CD4-positive, alpha-beta memory T cell (primary cell): ENCODE measurements at regions of chr1 and their contacts with region 1.

Region 1: GRCh38 chr1:226827968-226828513 is 42.4 kb upstream of the PSEN2 start:
- DNase-seq: peak; percentile 87 to 93 (median 90)
- H3K4me3 ChIP-seq: peak overlapping the region in 1 of 2 donors; percentile 11
- H3K4me3 Mint-ChIP-seq: peak overlapping the region; percentile 31 to 77 (median 53)
- H3K27ac ChIP-seq: peak overlapping the region; percentile 48
- H3K27ac Mint-ChIP-seq: peak overlapping the region; percentile 70 to 87 (median 80)
- H3K4me1 ChIP-seq: peaks cover 11% of the 10 kb centered on the region
- H3K4me1 Mint-ChIP-seq: peaks cover 9 to 31% (median 14%) of the 10 kb centered on the region in 4 donors
- H3K27me3 ChIP-seq: no peaks in the 10 kb centered on the region
- H3K27me3 Mint-ChIP-seq: no peaks in the 10 kb centered on the region

Region 2: GRCh38 chr1:226547754-226548191 is 280.3 kb before region 1 on chr1:
- CTCF ChIA-PET with region 1: no interaction called
- POLR2A ChIA-PET with region 1: no interaction called
- intact Hi-C with region 1: loop called (anchors 5 kb)
- DNase-seq: peak; percentile 49 to 63 (median 56)
- H3K4me3 ChIP-seq: peak overlapping the region in 1 of 2 donors; percentile 28
- H3K4me3 Mint-ChIP-seq: peak overlapping the region in 6 of 8 donors; percentile 33 to 71 (median 56)
- H3K27ac ChIP-seq: no peak overlapping the region
- H3K27ac Mint-ChIP-seq: no peak overlapping the region
- H3K4me1 ChIP-seq: peaks cover 22% of the 10 kb centered on the region
- H3K4me1 Mint-ChIP-seq: peaks cover 10 to 21% (median 14%) of the 10 kb centered on the region in 4 donors
- H3K27me3 ChIP-seq: peaks cover 17% of the 10 kb centered on the region
- H3K27me3 Mint-ChIP-seq: peaks cover 23 to 33% of the 10 kb centered on the region in 2 donors

Region 3: DNA sequence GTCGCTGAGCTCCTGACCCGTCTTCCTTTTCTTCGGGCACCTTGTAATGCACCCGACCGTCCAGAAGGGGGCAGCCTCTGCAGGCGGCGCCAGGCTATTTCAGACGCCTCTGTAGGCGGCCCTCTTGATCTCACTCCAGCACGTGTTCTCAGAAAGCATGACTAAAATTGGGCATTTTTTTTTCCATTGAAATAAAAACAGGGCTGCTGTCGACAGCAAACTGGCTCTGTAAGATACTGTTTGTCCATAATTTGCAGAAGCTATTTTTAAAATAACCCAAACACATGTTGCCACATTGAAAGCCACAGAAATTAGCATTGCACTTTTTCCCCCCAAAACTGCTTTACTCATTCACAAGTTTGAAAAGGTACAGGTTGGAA is 201.5 kb before region 1 on chr1:
- CTCF ChIA-PET with region 1: interaction called, 131 read pairs
- POLR2A ChIA-PET with region 1: interaction called, 10 read pairs
- intact Hi-C with region 1: loop called (anchors 1 kb)
- DNase-seq: peak; percentile 71 to 79 (median 74)
- H3K4me3 ChIP-seq: no peak overlapping the region
- H3K4me3 Mint-ChIP-seq: peak overlapping the region; percentile 34 to 84 (median 61)
- H3K27ac ChIP-seq: no peak overlapping the region
- H3K27ac Mint-ChIP-seq: peak overlapping the region in 6 of 7 donors; percentile 12 to 89 (median 64)
- H3K4me1 ChIP-seq: peaks cover 11% of the 10 kb centered on the region
- H3K4me1 Mint-ChIP-seq: peaks cover 11 to 31% (median 22%) of the 10 kb centered on the region in 4 donors
- H3K27me3 ChIP-seq: no peaks in the 10 kb centered on the region
- H3K27me3 Mint-ChIP-seq: peaks cover 0 to 2% of the 10 kb centered on the region in 2 donors

Region 4: DNA sequence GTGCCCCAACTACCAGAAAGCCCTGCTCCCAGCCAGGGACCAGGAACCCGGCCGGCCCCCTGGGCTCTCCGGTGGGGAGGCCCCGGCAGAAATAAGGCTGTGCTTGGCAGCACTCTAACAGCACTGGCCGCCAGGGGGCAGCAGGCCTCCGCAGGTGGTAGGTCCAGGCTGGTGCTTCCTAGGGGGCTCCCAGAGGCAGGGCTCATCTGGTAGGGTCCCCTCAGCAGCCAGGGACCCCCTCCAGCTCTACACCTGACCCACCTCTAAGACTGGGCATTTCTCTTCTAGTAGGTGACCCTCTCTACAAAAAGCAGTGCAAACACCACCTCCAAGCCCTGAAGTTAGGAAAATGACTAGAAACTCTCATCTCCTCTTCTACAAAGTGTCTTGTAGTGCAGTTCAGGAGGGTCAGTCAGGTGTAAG is 193.9 kb before region 1 on chr1:
- CTCF ChIA-PET with region 1: interaction called, 131 read pairs
- POLR2A ChIA-PET with region 1: interaction called, 10 read pairs
- intact Hi-C with region 1: loop called (anchors 1 kb)
- DNase-seq: peak; percentile 74 to 81 (median 78)
- H3K4me3 ChIP-seq: no peak overlapping the region
- H3K4me3 Mint-ChIP-seq: peak overlapping the region in 7 of 8 donors; percentile 1 to 82 (median 53)
- H3K27ac ChIP-seq: peak overlapping the region; percentile 56
- H3K27ac Mint-ChIP-seq: peak overlapping the region; percentile 72 to 94 (median 88)
- H3K4me1 ChIP-seq: peaks cover 53% of the 10 kb centered on the region
- H3K4me1 Mint-ChIP-seq: peaks cover 28 to 70% (median 53%) of the 10 kb centered on the region in 4 donors
- H3K27me3 ChIP-seq: no peaks in the 10 kb centered on the region
- H3K27me3 Mint-ChIP-seq: no peaks in the 10 kb centered on the region

Region 5: GRCh38 chr1:226649780-226650179 is 178.3 kb before region 1 on chr1:
- CTCF ChIA-PET with region 1: interaction called, 9 read pairs
- POLR2A ChIA-PET with region 1: interaction called, 3 read pairs
- intact Hi-C with region 1: loop called (anchors 1 kb)
- DNase-seq: peak in 3 of 5 donors; percentile 36 to 65 (median 42)
- H3K4me3 ChIP-seq: no peak overlapping the region
- H3K4me3 Mint-ChIP-seq: peak overlapping the region in 2 of 8 donors; percentile 32 to 45
- H3K27ac ChIP-seq: no peak overlapping the region
- H3K27ac Mint-ChIP-seq: peak overlapping the region in 5 of 7 donors; percentile 43 to 84 (median 66)
- H3K4me1 ChIP-seq: peaks cover 34% of the 10 kb centered on the region
- H3K4me1 Mint-ChIP-seq: peaks cover 28 to 61% (median 53%) of the 10 kb centered on the region in 4 donors
- H3K27me3 ChIP-seq: no peaks in the 10 kb centered on the region
- H3K27me3 Mint-ChIP-seq: no peaks in the 10 kb centered on the region